Colonic mucosa (tissue), 4 donors: ENCODE measurements at regions of chr13 and their contacts with region 1.

Region 1: DNA sequence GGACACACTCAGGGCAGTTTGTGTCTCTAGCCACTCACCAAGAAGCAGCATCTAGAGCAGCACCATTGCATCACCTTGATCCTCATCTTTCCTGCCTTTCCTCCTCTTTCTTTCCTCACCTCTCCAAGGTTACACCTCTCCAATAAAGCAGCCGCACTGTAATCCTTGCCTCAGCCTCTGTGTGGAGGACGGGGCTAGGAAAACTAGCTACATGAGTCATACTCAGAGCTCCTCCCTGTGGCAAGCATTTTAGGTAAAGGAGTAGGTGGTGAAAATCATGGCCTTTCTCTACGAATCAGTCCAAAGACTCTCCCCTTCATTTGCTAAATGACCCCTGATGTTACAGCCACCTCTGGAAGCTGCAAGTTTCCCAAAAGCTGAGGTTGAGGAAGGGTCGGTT is 108.9 kb downstream of the DNAJC15 start:
- DNase-seq: peak; percentile 25
- H3K4me3 ChIP-seq: no peak overlapping the region
- H3K27ac ChIP-seq: no peak overlapping the region
- H3K4me1 ChIP-seq: no peaks in the 10 kb centered on the region
- H3K27me3 ChIP-seq: no peaks in the 10 kb centered on the region
- CTCF ChIP-seq: no peak

Region 2: GRCh38 chr13:42681326-42682100 is 450.7 kb before region 1 on chr13:
- intact Hi-C with region 1: no loop called
- DNase-seq: no peak
- H3K4me3 ChIP-seq: no peak overlapping the region
- H3K27ac ChIP-seq: no peak overlapping the region
- H3K4me1 ChIP-seq: no peaks in the 10 kb centered on the region
- H3K27me3 ChIP-seq: no peaks in the 10 kb centered on the region
- CTCF ChIP-seq: no peak

Region 3: DNA sequence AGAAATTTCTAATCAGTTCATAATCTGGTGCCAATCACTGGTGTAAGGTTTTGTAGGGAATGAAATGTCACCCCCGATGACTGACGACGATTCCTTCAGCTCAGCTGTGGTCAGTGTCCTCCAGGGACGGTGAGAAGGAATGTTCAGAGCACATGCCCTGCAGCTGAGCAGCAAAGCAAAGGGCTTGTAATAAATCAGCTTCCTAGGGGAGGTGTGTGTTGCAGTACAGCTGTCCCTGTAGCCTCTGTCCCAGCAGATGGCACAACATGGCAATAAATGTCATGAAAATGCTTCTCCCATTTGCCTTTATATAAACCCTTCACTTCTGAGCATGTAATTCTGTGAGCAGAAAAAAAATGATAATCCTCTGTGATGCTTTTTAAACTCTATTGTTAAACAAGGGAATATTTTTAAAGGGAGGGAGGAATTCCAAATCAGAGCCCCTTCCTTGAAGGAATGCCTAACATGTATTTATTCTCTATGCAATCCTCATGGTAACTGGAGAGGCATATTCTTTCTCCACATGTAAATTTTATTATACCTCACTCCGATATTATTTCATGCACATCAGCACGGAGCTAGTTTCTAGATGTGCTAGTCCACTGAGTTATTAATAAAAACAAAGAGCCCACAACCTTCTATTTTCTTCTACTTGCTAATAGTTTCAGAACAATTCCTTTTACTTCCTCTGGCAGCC is 248.3 kb before region 1 on chr13:
- intact Hi-C with region 1: loop called (anchors 10 kb)
- DNase-seq: peak; percentile 23
- H3K4me3 ChIP-seq: no peak overlapping the region
- H3K27ac ChIP-seq: no peak overlapping the region
- H3K4me1 ChIP-seq: no peaks in the 10 kb centered on the region
- H3K27me3 ChIP-seq: no peaks in the 10 kb centered on the region
- CTCF ChIP-seq: no peak

Region 4: DNA sequence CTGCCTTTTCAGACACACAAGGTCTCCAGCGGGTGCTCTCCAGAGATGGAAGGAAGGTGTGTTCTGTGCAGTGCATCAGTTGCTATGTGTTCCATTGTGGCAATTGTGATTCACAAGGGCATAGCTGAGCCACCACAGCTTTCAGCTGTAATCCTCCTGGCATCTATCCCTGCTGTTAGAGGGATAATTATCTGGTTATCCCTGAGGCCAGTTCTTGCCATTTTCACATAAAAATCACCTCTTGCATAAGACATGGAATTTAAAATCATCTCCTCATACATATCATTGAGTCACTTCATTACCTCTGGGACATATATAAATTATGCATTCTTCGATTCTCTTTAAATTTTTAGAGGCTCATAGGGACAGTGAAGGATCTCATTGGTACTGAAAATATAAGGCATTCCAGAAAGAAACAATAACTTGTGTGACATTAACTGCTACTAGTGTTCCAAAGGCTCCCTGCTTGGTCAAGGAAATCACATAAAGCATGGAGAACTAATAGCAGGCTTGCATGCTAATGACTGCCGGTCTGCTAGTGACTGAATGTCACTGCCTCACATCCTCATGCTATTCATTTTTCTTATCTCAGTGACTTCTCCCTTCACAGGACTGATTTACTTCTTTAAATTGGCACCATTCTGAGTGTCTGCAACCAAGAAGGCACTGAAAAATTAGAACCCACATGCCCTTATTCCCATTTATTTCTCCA is 440.6 kb after region 1 on chr13:
- intact Hi-C with region 1: no loop called
- DNase-seq: no peak
- H3K4me3 ChIP-seq: no peak overlapping the region
- H3K27ac ChIP-seq: no peak overlapping the region
- H3K4me1 ChIP-seq: no peaks in the 10 kb centered on the region
- H3K27me3 ChIP-seq: no peaks in the 10 kb centered on the region
- CTCF ChIP-seq: no peak